ENCODE measurements at regions of chr3 and their contacts with region 1.

Region 1: DNA sequence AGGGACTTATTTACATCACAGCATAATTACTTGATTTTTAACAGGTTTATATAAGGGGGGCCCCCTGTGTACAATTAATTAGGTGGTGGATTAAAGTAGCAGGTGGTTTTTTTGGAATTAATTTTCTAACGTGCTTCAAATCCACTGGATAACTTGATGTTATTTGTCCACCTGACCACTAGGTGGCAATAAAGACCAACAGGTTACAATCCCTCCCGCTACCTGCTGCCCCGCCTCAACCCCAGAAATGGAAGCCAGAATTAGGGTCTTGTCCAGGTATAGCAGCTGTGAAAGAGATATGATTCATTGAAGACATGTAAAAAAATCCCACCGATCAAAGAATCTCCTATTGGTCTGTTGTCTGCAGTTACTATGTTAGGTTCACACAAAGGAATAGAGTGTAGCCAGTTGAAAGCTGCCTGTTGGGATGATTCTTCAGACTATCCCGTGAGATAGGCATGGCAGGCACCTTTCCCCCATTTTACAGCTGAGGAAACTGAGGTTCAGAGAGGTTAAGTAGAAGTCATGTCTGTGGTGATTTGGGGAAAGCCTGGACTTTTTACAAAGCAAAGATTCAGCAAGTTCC is 44.0 kb downstream of the MFSD1 start:
- DNase-seq: peak in 5 of 9 experiments; percentile 17 to 63 (median 28)
- ATAC-seq: peak; percentile 57
- H3K4me3 ChIP-seq: no peak overlapping the region
- H3K4me3 Mint-ChIP-seq: no peak overlapping the region
- H3K27ac ChIP-seq: no peak overlapping the region
- H3K27ac Mint-ChIP-seq: no peak overlapping the region
- H3K4me1 ChIP-seq: peaks cover 4% of the 10 kb centered on the region
- H3K4me1 Mint-ChIP-seq: peaks cover 9% of the 10 kb centered on the region
- H3K27me3 ChIP-seq: no peaks in the 10 kb centered on the region
- H3K27me3 Mint-ChIP-seq: no peaks in the 10 kb centered on the region
- CTCF ChIP-seq: peak; percentile 87

Region 2: GRCh38 chr3:157888040-157888439 is 957.8 kb before region 1 on chr3:
- CTCF ChIA-PET with region 1: no interaction called
- POLR2A ChIA-PET with region 1: no interaction called
- intact Hi-C with region 1: no loop called
- DNase-seq: no peak
- ATAC-seq: no peak
- H3K4me3 ChIP-seq: no peak overlapping the region
- H3K4me3 Mint-ChIP-seq: no peak overlapping the region
- H3K27ac ChIP-seq: no peak overlapping the region
- H3K27ac Mint-ChIP-seq: no peak overlapping the region
- H3K4me1 ChIP-seq: no peaks in the 10 kb centered on the region
- H3K4me1 Mint-ChIP-seq: no peaks in the 10 kb centered on the region
- H3K27me3 ChIP-seq: no peaks in the 10 kb centered on the region
- H3K27me3 Mint-ChIP-seq: no peaks in the 10 kb centered on the region
- CTCF ChIP-seq: no peak

Region 3: GRCh38 chr3:159260049-159260662 is 414.3 kb after region 1 on chr3:
- CTCF ChIA-PET with region 1: interaction called, 24 read pairs
- POLR2A ChIA-PET with region 1: no interaction called
- intact Hi-C with region 1: loop called in 1 of 2 experiments (anchors 1 kb)
- DNase-seq: peak in 4 of 9 experiments; percentile 9 to 56 (median 26)
- ATAC-seq: no peak
- H3K4me3 ChIP-seq: no peak overlapping the region
- H3K4me3 Mint-ChIP-seq: no peak overlapping the region
- H3K27ac ChIP-seq: no peak overlapping the region
- H3K27ac Mint-ChIP-seq: no peak overlapping the region
- H3K4me1 ChIP-seq: no peaks in the 10 kb centered on the region
- H3K4me1 Mint-ChIP-seq: no peaks in the 10 kb centered on the region
- H3K27me3 ChIP-seq: no peaks in the 10 kb centered on the region
- H3K27me3 Mint-ChIP-seq: peaks cover 7% of the 10 kb centered on the region
- CTCF ChIP-seq: peak; percentile 59

Region 4: DNA sequence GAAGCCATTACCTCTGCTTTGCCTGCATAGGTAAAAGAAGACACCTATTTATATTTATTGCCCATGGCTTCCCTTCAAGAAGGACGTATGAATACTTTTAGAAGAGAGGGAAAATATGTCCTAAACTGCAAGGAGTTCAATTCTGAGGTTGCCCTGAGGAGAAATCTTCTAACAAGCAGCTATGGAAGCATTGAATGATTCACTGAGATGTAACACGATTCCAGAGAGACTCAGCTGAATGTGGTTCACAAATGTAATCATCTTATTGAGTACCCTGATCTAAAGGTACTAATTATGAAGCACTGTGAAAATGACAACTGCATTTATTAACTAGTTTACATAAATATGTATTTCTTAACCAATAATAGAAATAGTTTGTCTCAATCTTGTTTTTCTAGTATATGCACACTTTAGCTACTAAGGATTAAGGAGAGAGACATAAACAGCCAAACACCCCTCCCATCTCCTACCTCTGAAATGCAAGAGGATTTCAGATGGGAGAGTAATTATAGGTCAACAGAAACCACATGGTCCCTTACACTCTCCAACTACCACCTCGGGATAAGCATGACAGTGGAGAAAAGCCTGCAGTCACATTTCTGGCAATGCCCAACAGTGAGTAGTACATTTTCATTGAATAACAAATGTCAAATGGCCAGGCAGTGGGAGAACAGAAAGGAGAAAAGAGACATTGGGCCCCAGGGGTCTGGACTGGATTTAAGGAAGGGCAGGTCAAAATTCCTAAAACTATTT is 636.6 kb after region 1 on chr3:
- CTCF ChIA-PET with region 1: no interaction called
- POLR2A ChIA-PET with region 1: no interaction called
- intact Hi-C with region 1: no loop called
- DNase-seq: no peak
- ATAC-seq: no peak
- H3K4me3 ChIP-seq: no peak overlapping the region
- H3K4me3 Mint-ChIP-seq: no peak overlapping the region
- H3K27ac ChIP-seq: no peak overlapping the region
- H3K27ac Mint-ChIP-seq: no peak overlapping the region
- H3K4me1 ChIP-seq: no peaks in the 10 kb centered on the region
- H3K4me1 Mint-ChIP-seq: no peaks in the 10 kb centered on the region
- H3K27me3 ChIP-seq: no peaks in the 10 kb centered on the region
- H3K27me3 Mint-ChIP-seq: no peaks in the 10 kb centered on the region
- CTCF ChIP-seq: no peak

Region 5: GRCh38 chr3:159804726-159805410 is 959.0 kb after region 1 on chr3:
- CTCF ChIA-PET with region 1: no interaction called
- POLR2A ChIA-PET with region 1: no interaction called
- intact Hi-C with region 1: loop called in 1 of 2 experiments (anchors 10 kb)
- DNase-seq: peak in 2 of 9 experiments; percentile 1 to 17
- ATAC-seq: no peak
- H3K4me3 ChIP-seq: no peak overlapping the region
- H3K4me3 Mint-ChIP-seq: no peak overlapping the region
- H3K27ac ChIP-seq: no peak overlapping the region
- H3K27ac Mint-ChIP-seq: no peak overlapping the region
- H3K4me1 ChIP-seq: no peaks in the 10 kb centered on the region
- H3K4me1 Mint-ChIP-seq: no peaks in the 10 kb centered on the region
- H3K27me3 ChIP-seq: no peaks in the 10 kb centered on the region
- H3K27me3 Mint-ChIP-seq: peaks cover 3% of the 10 kb centered on the region
- CTCF ChIP-seq: no peak

Region 6: GRCh38 chr3:160343132-160343531 is 1497.3 kb after region 1 on chr3:
- CTCF ChIA-PET with region 1: no interaction called
- POLR2A ChIA-PET with region 1: no interaction called
- intact Hi-C with region 1: loop called in 1 of 2 experiments (anchors 5 kb)
- DNase-seq: peak in 2 of 9 experiments; percentile 1 to 23
- ATAC-seq: no peak
- H3K4me3 ChIP-seq: no peak overlapping the region
- H3K4me3 Mint-ChIP-seq: no peak overlapping the region
- H3K27ac ChIP-seq: no peak overlapping the region
- H3K27ac Mint-ChIP-seq: no peak overlapping the region
- H3K4me1 ChIP-seq: no peaks in the 10 kb centered on the region
- H3K4me1 Mint-ChIP-seq: no peaks in the 10 kb centered on the region
- H3K27me3 ChIP-seq: no peaks in the 10 kb centered on the region
- H3K27me3 Mint-ChIP-seq: no peaks in the 10 kb centered on the region
- CTCF ChIP-seq: peak; percentile 46

Measured in CD8-positive, alpha-beta T cell (primary cell).